HEK293T (cell line): ENCODE measurements at regions of chr16 and their contacts with region 1.

Region 1: DNA sequence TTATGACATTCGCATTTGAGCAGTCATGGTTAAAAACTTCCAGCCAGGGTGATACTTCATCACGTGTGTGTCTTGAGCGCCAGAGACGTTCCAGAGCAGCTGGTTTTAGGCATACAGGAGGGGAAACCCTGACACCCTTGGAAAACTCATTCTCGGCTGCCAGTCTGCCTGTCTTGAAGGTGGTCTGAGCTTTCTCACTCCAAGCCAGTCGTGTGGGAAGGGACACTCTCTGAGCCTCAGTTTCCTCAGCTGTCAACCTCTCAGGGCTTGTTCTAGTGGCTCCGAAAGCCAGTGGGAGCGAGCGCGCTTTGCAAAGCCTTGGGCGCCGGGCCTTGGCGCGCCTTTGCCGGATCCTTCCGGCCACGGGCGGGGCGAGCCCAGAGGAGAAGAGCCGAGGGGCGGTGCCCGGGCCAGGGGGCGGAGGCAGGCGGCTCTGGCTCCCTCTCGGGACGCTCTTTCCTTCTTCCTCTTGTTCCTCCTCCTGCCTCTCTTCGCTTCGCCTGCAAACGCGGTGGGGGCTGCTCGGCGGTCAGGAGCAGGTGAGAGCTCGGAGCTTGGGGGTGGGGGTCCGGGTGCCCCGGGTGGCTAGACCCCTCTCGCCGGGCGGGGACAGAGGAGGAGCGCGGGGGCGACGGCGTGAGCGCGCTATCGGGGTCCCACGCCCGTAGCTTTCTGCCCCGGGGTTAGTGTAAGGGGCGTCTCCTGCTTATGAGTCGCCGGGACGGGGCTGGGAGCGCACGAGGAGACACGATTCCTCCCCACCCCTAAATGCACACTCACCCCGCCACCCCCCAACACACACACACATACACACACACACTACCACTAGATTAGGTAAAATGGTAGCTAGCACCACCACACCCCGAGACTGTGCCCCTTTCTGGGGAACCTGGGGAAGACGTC is at the start of gene LDAF1:
- DNase-seq: peak; percentile 85

Region 2: GRCh38 chr16:21103941-21104887 is 54.2 kb before region 1 on chr16:
- CTCF ChIA-PET with region 1: no interaction called
- POLR2A ChIA-PET with region 1: no interaction called
- DNase-seq: no peak

Region 3: GRCh38 chr16:21300309-21301167 is 142.1 kb after region 1 on chr16:
- CTCF ChIA-PET with region 1: interaction called, 10 read pairs
- POLR2A ChIA-PET with region 1: interaction called, 17 read pairs
- DNase-seq: peak; percentile 87